Dendritic cell treated with granulocyte-macrophage colony-stimulating factor and Interleukin-4, amounts not matched to agents 40 ng/mL and 50 ng/mL, for 4 days (primary cell): ENCODE measurements at regions of chr1 and their contacts with region 1.

Region 1: DNA sequence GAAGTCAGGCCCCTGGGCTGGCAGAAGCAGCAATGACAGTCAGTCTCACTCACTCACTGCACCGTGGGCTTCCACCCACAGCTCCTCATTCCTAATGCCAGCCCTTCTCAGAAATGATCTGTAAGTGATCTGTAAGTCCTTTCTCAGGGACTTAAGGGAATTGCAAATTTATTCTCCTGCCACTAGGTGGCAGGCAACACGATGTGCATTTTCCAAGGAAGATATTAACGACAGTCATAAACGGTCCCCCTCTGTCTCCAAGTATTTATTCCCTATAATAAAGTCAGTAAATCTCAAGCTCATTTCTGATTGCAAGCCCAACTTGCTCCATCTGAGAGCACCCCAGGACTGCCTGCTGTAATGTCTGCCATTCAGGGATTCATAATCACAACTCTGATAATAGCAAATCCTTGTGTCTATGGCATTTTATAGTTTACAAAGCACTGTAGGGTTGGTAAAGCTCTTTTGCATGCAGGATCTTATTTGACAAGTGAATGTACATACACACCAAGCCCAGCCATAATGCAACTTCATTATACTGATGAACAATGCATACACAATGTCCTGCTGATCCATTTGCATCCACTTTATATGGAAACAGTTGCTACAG is 380.6 kb upstream of the CAMK1G start:
- H3K4me3 Mint-ChIP-seq: no peak overlapping the region
- H3K27ac Mint-ChIP-seq: no peak overlapping the region
- H3K4me1 Mint-ChIP-seq: peaks cover 9% of the 10 kb centered on the region
- H3K27me3 Mint-ChIP-seq: peaks cover 22% of the 10 kb centered on the region

Region 2: DNA sequence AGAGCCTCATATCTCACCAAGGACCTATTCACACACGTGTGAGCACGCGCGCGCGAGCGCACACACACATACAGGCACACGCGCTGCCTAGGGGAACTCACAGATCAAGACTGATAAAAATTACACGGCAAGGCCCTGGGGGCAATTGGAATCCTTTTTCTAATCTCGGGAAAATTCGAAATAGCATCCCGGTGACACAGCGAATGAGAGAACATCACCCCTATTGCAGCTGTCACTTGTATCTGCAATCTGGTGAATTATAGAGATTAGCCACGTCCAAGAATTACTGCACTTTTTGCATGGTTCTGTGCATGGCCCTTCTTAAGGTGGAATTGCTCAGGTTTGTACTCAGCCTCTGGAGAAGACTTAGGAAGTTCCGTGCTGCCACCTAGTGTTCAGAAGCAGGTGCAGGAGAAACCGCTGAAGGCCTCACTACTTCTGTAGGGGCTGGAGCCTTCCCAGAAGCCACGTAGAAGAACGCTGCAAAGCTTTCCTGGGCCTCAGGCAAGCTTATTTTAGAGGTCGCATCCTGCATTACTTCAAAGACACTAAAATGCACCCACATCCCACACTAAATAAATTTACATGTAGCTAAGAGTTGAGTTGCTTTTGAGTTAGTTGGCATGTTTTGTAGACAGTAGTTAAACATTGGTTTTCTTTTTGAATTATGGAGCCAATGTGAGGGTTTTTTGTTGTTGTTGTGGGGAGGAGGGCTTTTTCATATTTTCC is 151.3 kb after region 1 on chr1:
- intact Hi-C with region 1: loop called (anchors 5 kb)
- H3K4me3 Mint-ChIP-seq: no peak overlapping the region
- H3K27ac Mint-ChIP-seq: no peak overlapping the region
- H3K4me1 Mint-ChIP-seq: no peaks in the 10 kb centered on the region
- H3K27me3 Mint-ChIP-seq: peaks cover 3% of the 10 kb centered on the region

Region 3: GRCh38 chr1:209513226-209513625 is 310.3 kb after region 1 on chr1:
- intact Hi-C with region 1: loop called (anchors 5 kb)
- H3K4me3 Mint-ChIP-seq: no peak overlapping the region
- H3K27ac Mint-ChIP-seq: no peak overlapping the region
- H3K4me1 Mint-ChIP-seq: no peaks in the 10 kb centered on the region
- H3K27me3 Mint-ChIP-seq: no peaks in the 10 kb centered on the region